GM18951 (cell line): ENCODE measurements at regions of chr9 and their contacts with region 1.

Region 1: DNA sequence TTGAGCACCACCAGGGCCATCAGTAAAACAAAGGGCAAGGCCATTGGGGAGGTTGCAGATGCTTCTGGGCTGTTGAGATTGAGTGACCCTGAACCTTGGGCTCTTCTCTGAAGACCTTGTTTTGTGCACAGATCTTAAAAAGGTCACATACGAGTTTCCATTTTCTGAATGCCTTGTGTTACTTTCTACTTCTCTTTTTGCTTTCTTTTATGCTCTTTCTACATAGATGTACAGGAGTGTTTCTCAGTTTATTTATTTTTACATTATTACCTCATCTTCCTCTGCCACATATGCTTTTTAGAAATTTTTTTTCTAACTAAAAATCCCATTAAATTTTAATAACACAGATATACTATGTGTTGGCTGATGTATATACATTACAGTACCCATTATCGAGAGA is at the start of gene IFNA5:
- POLR2A ChIP-seq: no peak

Region 2: GRCh38 chr9:21015129-21015815 is 289.9 kb before region 1 on chr9:
- in situ Hi-C with region 1: no loop called
- POLR2A ChIP-seq: no peak

Region 3: DNA sequence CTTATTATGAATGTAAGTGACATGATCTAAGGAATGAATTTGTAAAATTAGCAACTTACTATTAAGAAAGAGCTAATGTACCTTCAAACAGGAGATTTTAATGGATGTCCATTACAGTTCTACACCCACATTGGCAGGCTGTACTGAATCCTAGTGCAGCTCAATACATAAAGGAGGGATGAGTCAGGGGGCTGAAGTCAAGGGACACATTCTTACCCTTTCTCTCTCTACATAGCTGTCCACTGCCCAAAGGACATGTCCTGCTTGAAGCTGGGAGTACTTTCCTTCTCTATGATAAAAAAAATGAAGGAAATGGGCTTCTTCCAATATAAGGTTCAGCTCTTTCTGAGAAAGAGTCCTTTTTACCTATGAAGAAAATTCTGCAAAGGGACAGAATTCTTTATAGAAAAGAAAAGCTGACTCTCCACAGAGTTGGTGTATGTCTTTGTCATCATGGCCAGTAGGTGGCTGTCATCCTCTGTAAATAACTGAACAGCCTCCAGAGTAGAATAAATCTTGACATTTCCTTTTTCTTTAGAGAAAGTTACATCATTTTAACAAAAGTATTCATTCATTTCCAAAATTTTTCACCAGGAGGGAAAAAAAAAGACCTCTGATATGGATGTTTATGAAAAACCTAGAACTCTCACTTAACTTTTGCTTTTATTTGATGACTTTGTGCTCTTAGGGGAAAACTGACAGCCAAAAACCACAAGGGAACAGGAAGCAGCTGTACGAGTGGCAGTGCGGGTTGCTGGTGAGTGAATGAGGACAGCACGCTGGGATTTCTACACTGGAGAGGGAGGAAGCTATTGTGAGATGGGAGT is 52.3 kb before region 1 on chr9:
- in situ Hi-C with region 1: loop called (anchors 5 kb)
- POLR2A ChIP-seq: no peak

Region 4: DNA sequence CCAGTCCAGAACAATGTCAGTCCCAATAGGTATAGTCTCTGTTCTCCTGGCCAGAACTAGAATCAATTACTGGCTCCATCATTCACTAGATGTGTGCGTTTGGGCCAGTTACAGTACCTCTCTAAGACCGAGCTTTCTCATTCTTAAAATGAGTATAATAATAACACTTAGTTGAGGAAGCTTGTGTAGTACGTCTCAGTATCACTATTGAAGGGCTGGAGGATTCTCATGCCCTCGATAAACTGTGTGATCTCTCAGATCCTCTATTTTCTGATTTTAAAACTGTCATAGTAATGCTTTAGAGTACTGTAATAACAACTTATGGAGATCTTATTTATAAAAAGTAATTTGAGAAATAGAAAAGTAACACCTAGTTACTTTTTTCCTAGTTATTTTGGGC is 638.3 kb after region 1 on chr9:
- in situ Hi-C with region 1: no loop called
- POLR2A ChIP-seq: no peak